ENCODE measurements at regions of chr5 and their contacts with region 1.

Region 1: DNA sequence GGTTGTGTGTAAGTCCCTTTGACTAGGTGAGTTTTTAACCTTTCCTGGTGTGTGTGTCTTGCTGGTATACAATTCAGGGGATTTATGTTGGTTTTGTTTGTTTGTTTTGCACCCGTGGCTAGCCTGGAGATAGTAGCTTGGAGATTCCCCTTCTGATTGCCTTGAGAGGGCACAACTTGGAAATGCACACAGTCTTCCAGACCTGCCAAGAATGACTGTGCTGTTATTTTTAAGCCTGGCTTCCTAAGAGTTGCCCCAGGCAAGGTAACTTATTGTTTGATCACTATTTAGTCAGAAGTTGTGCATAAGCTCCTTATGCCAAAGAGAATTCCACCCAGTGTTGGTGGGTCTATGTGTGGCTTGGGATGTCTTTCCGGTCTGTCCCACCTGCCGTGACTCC is 421.9 kb upstream of the KCNN2 start:
- DNase-seq: no peak
- H3K4me3 ChIP-seq: no peak overlapping the region
- H3K27ac ChIP-seq: no peak overlapping the region
- H3K4me1 ChIP-seq: no peaks in the 10 kb centered on the region
- H3K27me3 ChIP-seq: no peaks in the 10 kb centered on the region
- CTCF ChIP-seq: no peak
- POLR2A ChIP-seq: no peak

Region 2: DNA sequence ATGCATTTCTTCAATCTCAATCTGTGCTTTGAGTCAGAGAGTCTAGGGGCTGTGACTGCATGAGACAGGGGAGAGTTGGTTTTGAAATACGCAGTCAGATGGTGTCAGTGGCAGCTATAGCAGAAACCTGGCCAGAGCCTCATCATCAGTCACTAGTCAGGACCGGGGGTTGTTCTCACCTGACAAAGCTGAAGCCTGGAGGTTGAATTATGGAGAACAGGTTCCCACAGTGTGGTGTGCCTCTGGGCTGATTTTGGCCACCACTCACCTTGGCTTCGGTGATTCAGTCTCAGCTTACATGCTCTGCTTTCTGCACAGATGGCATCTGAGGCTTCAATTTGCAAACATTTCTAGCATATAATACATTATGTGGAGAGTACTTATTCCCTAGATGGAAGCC is 39.1 kb before region 1 on chr5:
- intact Hi-C with region 1: no loop called
- DNase-seq: no peak
- H3K4me3 ChIP-seq: no peak overlapping the region
- H3K27ac ChIP-seq: no peak overlapping the region
- H3K4me1 ChIP-seq: no peaks in the 10 kb centered on the region
- H3K27me3 ChIP-seq: no peaks in the 10 kb centered on the region
- CTCF ChIP-seq: no peak
- POLR2A ChIP-seq: no peak

Region 3: DNA sequence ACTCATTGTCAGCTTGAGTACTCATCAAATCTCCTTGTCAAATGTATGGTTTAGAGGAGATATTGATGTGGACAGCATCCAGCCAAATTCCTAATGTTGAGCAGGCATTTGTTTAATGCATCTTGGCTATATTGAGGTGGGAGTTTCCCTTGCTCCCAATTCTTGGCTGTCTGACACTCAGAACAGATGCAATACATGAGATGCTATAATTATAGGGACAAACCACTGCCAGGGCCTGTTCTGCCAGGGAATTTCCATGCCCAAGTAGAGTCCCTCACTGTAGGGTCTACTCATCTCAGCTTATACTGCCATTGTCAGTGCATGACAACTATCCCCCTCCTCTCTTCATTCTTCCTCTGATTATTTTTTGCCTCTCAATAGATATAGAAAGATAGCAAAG is 30.0 kb after region 1 on chr5:
- intact Hi-C with region 1: loop called (anchors 1 kb)
- DNase-seq: no peak
- H3K4me3 ChIP-seq: no peak overlapping the region
- H3K27ac ChIP-seq: no peak overlapping the region
- H3K4me1 ChIP-seq: no peaks in the 10 kb centered on the region
- H3K27me3 ChIP-seq: no peaks in the 10 kb centered on the region
- CTCF ChIP-seq: no peak
- POLR2A ChIP-seq: no peak

Measured in breast epithelium (tissue), 4 donors.